ENCODE measurements at regions of chr22 and their contacts with region 1.

Region 1: DNA sequence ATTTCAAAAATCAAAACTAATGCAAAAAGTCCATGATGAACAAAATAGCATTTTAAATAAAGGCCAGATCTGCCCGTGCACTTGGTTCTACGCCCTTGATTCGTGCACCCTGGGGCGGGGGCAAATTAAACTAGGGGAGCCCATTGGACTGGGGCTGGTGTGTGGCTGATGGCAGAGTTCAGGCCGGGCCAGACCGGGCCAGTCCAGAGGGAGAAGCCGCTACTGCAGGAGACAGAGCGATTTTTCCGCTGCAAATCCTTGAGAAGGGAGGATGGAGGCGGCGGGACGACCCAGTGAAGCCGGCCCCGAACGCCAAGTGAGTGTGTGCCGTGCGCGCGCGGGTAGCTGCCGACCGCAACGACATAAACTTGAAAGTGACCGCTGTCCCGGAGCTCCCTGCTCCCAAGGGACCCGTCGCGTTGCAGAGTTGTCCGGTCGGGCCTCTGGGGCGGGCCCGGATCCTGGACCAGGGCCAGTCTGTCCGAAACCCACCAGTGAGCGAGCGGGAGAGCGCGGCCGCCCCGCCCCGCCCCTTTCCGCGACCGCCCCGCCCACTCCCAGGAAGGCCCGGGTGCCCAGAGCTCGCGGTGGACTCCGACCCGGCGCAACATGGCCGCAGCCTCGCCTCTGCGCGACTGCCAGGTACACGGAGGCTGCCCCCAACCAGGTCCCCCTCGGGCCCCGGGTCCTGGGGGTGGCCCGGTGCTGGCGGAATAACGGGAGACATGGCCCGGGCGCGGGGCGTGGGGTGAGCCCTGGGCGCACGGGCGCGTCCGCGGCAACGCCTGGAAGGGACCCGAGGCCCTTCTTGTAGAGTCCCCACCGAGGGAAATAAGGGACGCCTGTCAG is at the start of gene TTC38:
- DNase-seq: peak; percentile 99
- H3K4me3 ChIP-seq: peak within 1 kb of the TSS; percentile 76 to 90
- H3K27ac ChIP-seq: peak within 1 kb of the TSS; percentile 31 to 81; a peak in 3 of 4 replicates
- H3K4me1 ChIP-seq: peaks cover 0 to 12% of the 10 kb centered on the region in 2 experiments; a peak in 2 of 4 replicates
- H3K27me3 ChIP-seq: no peaks in the 10 kb centered on the region
- CTCF ChIP-seq: no peak
- EP300 ChIP-seq: no peak
- RAD21 ChIP-seq: no peak
- polyA plus RNA-seq, gene TTC38: 24.0 and 25.6 TPM in 2 replicates

Region 2: DNA sequence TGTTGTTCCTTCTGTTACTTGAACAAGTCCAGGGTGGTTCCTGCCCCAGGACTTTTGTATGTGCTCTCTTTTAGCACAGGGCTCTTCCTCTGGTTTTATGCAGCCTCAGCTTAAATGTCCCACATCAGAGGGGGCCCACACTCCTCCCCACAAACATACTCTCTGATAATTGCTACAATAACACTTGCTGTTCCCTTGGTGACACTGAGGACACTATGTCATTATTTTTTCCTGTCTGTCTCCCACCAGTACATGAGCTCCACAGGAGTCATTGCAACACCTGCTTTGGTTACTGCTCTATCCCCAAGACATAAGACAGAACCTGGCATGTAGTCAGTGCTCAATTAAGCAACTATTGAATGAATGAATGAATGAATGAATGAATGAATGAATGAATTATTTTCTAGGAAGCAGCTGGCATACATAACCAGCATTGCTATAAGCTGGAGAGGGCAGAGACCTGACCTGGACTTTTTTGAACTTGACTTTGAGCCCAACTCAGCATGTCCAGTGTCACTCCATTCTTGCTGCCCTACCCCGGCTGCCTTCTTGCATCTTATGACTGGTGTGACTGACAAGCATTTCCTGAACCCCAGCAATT is 283.2 kb before region 1 on chr22:
- CTCF ChIA-PET with region 1: no interaction called
- POLR2A ChIA-PET with region 1: no interaction called
- DNase-seq: no peak
- H3K4me3 ChIP-seq: no peak overlapping the region
- H3K27ac ChIP-seq: no peak overlapping the region
- H3K4me1 ChIP-seq: no peaks in the 10 kb centered on the region
- H3K27me3 ChIP-seq: no peaks in the 10 kb centered on the region
- CTCF ChIP-seq: no peak
- EP300 ChIP-seq: no peak
- RAD21 ChIP-seq: no peak

Region 3: GRCh38 chr22:46213052-46213451 is 54.6 kb before region 1 on chr22:
- CTCF ChIA-PET with region 1: no interaction called
- POLR2A ChIA-PET with region 1: no interaction called
- DNase-seq: no peak
- H3K4me3 ChIP-seq: no peak overlapping the region
- H3K27ac ChIP-seq: no peak overlapping the region
- H3K4me1 ChIP-seq: no peaks in the 10 kb centered on the region
- H3K27me3 ChIP-seq: no peaks in the 10 kb centered on the region
- CTCF ChIP-seq: no peak
- EP300 ChIP-seq: no peak
- RAD21 ChIP-seq: no peak

Region 4: DNA sequence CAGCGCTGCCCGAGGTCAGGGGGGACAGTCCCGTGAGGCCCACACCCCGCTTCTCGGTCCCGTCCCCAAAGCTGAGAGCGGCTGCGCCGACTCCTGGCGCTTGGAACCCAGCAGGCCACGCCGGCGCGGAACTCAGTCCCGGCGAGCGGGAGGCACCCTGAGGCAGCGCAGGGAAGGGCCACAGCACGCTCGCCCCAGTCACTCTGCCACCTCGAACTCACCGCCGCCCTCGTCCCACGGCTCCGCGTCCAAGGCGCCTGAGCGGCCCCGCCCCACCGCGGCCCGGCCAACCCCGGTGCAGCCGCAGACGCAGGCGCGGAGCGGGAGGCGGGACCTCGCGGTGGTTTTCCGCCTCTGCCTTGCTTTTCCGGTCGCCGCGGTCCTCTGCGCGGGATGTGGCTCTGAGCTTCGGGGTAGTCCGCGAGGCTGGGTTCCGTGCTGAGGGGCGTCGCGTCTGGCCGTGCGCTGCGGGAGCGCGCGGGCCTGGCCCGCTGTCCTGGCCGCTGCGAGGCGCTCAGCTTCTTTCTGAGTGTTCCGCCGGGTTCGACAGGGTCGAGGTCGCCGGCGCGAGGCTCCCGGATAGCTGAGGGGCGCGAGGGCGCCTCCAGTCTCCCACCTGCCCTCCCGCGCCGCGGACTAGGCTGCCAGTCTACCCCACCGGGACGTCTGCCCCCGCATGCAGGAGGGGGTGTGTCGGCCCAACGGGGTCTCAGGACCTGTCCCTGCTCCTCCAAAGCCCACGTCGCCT is 17.4 kb before region 1 on chr22 and contains the start of gene CDPF1:
- CTCF ChIA-PET with region 1: interaction called, 6 read pairs
- POLR2A ChIA-PET with region 1: interaction called, 12 read pairs
- DNase-seq: peak; percentile 98
- H3K4me3 ChIP-seq: peak within 1 kb of the TSS; percentile 91 to 93
- H3K27ac ChIP-seq: peak within 1 kb of the TSS; percentile 64 to 92
- H3K4me1 ChIP-seq: peaks cover 0 to 48% of the 10 kb centered on the region in 2 experiments; a peak in 3 of 4 replicates
- H3K27me3 ChIP-seq: no peaks in the 10 kb centered on the region
- CTCF ChIP-seq: no peak
- EP300 ChIP-seq: no peak
- RAD21 ChIP-seq: no peak; the same call in 1 of the 2 replicates
- polyA plus RNA-seq, gene CDPF1: 25.3 and 29.0 TPM in 2 replicates

Region 5: GRCh38 chr22:46346680-46347405 is 79.2 kb after region 1 on chr22:
- CTCF ChIA-PET with region 1: no interaction called
- POLR2A ChIA-PET with region 1: no interaction called
- DNase-seq: no peak
- H3K4me3 ChIP-seq: no peak overlapping the region
- H3K27ac ChIP-seq: no peak overlapping the region
- H3K4me1 ChIP-seq: no peaks in the 10 kb centered on the region
- H3K27me3 ChIP-seq: no peaks in the 10 kb centered on the region
- CTCF ChIP-seq: no peak
- EP300 ChIP-seq: no peak
- RAD21 ChIP-seq: no peak

Region 6: GRCh38 chr22:46462726-46463371 is 195.2 kb after region 1 on chr22:
- CTCF ChIA-PET with region 1: no interaction called
- POLR2A ChIA-PET with region 1: no interaction called
- DNase-seq: no peak
- H3K4me3 ChIP-seq: no peak overlapping the region
- H3K27ac ChIP-seq: 0 out of 4 replicates have a peak overlapping the region, but pooled peaks of 1 of the 2 experiments have one; percentile 12
- H3K4me1 ChIP-seq: no peaks in the 10 kb centered on the region
- H3K27me3 ChIP-seq: no peaks in the 10 kb centered on the region
- CTCF ChIP-seq: no peak
- EP300 ChIP-seq: peak in 1 of 2 experiments; percentile 74; a peak in 2 of 4 replicates
- RAD21 ChIP-seq: no peak

Measured in SK-N-SH (cell line).